GM12878 (cell line): ENCODE measurements at regions of chr10 and their contacts with region 1.

Region 1: DNA sequence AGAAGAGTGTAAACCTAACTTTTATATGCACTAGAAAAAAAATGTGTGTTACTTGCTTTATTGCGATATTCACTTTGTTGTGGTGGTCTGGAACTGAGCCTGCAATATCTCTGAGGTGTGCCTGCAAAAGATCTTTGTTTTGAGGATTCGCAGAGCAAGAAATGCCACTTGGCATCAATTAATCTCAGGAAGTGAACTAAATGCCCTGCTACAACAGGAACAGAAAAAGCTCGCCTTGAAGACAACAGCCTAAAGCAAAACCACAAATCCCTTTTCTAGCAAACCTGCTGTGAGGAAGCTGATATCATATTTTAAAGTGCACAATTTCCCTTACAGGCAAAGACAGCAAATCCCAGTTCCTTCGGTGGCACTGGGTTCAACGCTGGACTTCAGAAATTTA is 675.8 kb downstream of the KCNMA1 start:
- DNase-seq: no peak
- ATAC-seq: no peak
- H3K4me3 ChIP-seq: no peak overlapping the region
- H3K27ac ChIP-seq: no peak overlapping the region
- H3K4me1 ChIP-seq: no peaks in the 10 kb centered on the region
- H3K27me3 ChIP-seq: no peaks in the 10 kb centered on the region
- CTCF ChIP-seq: no peak
- EP300 ChIP-seq: no peak
- POLR2A ChIP-seq: no peak
- RAD21 ChIP-seq: no peak

Region 2: DNA sequence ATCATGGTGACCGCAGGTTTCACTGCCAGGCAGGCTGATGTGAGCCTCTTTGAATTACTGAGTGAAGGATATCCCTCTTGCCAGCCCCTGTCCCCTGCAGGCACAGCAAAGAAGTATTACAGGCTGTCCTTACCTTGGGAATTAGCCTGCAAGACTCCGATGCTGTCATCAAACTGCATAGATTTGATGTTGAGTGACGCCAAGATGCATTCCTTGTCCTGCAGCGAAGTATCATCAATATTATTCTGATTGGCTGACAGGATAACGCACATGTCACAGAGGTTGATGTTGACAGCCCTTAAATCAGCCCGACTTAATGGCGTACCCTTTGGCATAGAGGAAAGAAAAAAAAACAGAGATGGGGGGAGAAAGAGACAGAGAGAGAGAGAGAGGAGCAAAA is 17.2 kb before region 1 on chr10:
- CTCF ChIA-PET with region 1: interaction called, 4 read pairs
- POLR2A ChIA-PET with region 1: interaction called, 16 read pairs
- RAD21 ChIA-PET with region 1: no interaction called
- SMC1A ChIA-PET with region 1: no interaction called
- in situ Hi-C with region 1: no loop called
- intact Hi-C with region 1: no loop called
- DNase-seq: no peak
- ATAC-seq: no peak
- H3K4me3 ChIP-seq: no peak overlapping the region
- H3K27ac ChIP-seq: no peak overlapping the region
- H3K4me1 ChIP-seq: no peaks in the 10 kb centered on the region
- H3K27me3 ChIP-seq: no peaks in the 10 kb centered on the region
- CTCF ChIP-seq: no peak
- EP300 ChIP-seq: no peak
- POLR2A ChIP-seq: no peak
- RAD21 ChIP-seq: no peak

Region 3: DNA sequence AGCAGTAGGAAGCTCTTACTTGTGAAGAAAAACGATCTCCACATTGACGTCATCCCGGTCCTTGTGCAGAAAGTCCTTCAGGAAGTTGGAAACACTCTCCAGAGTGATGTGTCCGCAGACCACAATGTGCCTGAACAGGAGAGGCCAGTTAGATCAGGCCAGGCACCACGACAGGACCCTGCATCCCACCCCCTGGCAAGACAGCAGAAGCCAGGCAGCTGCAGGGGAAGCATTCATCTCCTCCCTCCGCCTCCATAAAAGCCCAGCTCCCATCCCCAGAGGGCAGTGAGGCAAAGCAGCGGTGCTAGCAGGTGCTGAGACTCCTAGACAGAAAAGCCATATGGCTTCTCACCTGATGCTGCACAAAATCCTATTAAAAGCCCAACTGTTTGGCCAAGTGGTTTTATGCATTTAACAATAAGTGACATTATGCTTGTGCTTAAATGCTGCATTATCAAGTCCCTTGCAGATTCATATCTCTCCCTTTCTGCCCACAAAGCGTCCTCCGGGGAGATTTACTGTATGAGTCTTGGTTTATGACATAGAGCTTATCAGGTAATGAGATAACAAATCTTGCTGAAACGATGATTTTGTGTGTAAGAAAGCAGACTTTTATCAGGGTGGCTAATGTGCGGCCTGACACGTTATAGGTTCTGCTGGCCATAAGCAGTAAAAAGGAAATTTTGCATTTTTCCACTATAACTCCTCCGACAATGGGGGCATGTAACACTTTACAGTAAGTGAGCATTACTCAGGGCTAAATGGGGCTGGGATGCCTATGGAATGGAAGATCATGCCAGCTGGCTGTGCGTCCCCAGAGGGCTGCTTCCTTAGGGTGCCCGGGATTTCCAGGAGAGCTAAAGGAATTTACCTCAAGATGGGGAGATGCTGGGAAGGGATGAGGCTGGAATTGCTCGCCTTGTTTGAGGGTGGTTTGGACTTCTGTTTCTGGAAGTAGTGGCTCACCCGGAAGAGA is 128.8 kb after region 1 on chr10:
- CTCF ChIA-PET with region 1: no interaction called
- POLR2A ChIA-PET with region 1: no interaction called
- RAD21 ChIA-PET with region 1: no interaction called
- SMC1A ChIA-PET with region 1: no interaction called
- in situ Hi-C with region 1: no loop called
- intact Hi-C with region 1: no loop called
- DNase-seq: no peak
- ATAC-seq: no peak
- H3K4me3 ChIP-seq: no peak overlapping the region
- H3K27ac ChIP-seq: no peak overlapping the region
- H3K4me1 ChIP-seq: no peaks in the 10 kb centered on the region
- H3K27me3 ChIP-seq: no peaks in the 10 kb centered on the region
- CTCF ChIP-seq: no peak
- EP300 ChIP-seq: no peak
- POLR2A ChIP-seq: no peak
- RAD21 ChIP-seq: no peak